Esophagus squamous epithelium (tissue), 5 donors: ENCODE measurements at regions of chr7 and their contacts with region 1.

Region 1: DNA sequence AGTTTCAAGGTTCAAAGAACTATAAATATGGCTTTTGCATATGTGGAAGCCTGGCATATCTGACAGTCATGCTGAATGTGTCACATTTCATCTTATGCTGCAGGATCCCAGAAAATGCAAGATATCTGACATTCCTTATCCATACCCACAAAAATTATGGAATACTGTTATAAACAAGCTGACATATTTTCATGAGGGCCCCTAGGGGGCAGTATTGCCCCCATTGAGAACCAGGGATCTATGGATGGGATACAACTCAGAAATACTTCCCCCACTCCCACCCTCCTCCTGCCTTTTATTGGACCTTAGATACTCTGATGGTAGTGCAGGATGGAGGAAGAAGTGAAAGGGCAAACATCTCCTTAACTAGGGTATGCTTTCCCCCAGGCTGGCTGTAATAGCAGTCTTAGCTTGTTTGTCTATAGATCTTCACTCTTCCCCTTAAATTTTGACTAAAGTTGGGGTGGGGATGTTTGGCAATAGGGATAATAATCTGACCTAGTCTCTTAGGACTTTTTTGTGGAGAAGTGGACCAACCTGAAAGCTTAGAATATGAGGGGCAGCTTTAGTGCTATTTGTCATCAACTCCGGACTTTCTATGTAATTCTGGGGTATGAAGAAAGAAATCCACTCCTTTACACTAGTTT is 3.5 kb upstream of the GNGT1 start:
- DNase-seq: no peak
- H3K4me3 ChIP-seq: no peak overlapping the region
- H3K27ac ChIP-seq: no peak overlapping the region
- H3K4me1 ChIP-seq: no peaks in the 10 kb centered on the region
- H3K27me3 ChIP-seq: no peaks in the 10 kb centered on the region
- CTCF ChIP-seq: peak; percentile 20 to 69 (median 45)
- POLR2A ChIP-seq: no peak

Region 2: DNA sequence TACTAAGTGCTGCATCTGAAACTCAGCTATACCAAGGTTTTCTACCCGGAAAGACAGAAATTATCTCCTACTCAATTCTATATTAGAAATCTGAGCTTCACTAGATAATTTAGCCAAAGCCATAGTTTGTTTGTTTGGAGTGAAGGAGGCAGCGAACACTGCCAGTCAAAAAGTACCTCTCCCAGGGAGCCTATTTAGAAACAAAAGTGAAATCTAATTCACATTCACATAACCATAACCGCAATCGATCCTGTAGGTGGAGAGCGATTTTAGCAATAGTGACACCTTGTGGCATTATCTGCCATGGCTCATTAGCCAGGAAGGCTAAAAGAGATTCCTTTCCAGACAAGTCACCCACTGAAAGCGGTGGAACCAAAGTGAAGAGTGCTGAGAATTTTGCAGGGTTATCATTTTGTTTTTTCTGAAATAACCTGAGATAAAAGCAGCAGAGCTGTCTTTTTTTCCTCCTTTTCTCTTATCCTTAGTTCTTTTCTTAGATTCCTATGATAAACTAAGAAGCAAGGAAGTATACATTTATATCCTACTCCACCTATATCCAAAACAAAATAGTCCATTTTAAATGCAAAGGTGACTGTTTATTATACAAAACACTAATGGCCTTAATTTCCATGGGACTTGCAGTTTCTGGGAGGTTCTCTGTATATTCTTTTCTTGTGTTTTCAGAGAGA is 184.9 kb after region 1 on chr7:
- intact Hi-C with region 1: loop called (anchors 5 kb)
- DNase-seq: no peak
- H3K4me3 ChIP-seq: peak overlapping the region in 3 of 4 donors; percentile 13 to 46 (median 14)
- H3K27ac ChIP-seq: no peak overlapping the region
- H3K4me1 ChIP-seq: peaks cover 0 to 9% (median 0%) of the 10 kb centered on the region in 3 donors
- H3K27me3 ChIP-seq: no peaks in the 10 kb centered on the region
- CTCF ChIP-seq: peak; percentile 40 to 71 (median 66)
- POLR2A ChIP-seq: no peak